PC-3 (cell line): ENCODE measurements at regions of chr2 and their contacts with region 1.

Region 1: GRCh38 chr2:211045025-211045424 is 488.6 kb downstream of the CPS1 start:
- DNase-seq: peak; percentile 46
- ATAC-seq: peak; percentile 85
- H3K4me3 ChIP-seq: no peak overlapping the region
- H3K27ac ChIP-seq: no peak overlapping the region
- H3K4me1 ChIP-seq: peaks cover 12% of the 10 kb centered on the region
- H3K27me3 ChIP-seq: peaks cover 18% of the 10 kb centered on the region; the same call in 1 of the 2 replicates
- CTCF ChIP-seq: no peak

Region 2: GRCh38 chr2:210203157-210203947 is 841.7 kb before region 1 on chr2:
- CTCF ChIA-PET with region 1: no interaction called
- POLR2A ChIA-PET with region 1: interaction called, 30 read pairs
- intact Hi-C with region 1: no loop called
- DNase-seq: no peak
- ATAC-seq: no peak
- H3K4me3 ChIP-seq: no peak overlapping the region
- H3K27ac ChIP-seq: no peak overlapping the region
- H3K4me1 ChIP-seq: no peaks in the 10 kb centered on the region
- H3K27me3 ChIP-seq: peaks cover 49% of the 10 kb centered on the region
- CTCF ChIP-seq: no peak